ENCODE measurements at regions of chr17 and their contacts with region 1.

Region 1: GRCh38 chr17:38421171-38421841 is 7.0 kb upstream of the ARHGAP23 start:
- DNase-seq: no peak
- H3K4me3 ChIP-seq: no peak overlapping the region
- H3K27ac ChIP-seq: no peak overlapping the region
- H3K4me1 ChIP-seq: peaks cover 0 to 40% (median 35%) of the 10 kb centered on the region in 4 experiments
- H3K27me3 ChIP-seq: peaks cover 3 to 50% (median 31%) of the 10 kb centered on the region in 5 experiments

Region 2: GRCh38 chr17:38485146-38485468 is 63.8 kb after region 1 on chr17:
- CTCF ChIA-PET with region 1: interaction called, 47 read pairs
- POLR2A ChIA-PET with region 1: no interaction called
- DNase-seq: no peak
- H3K4me3 ChIP-seq: no peak overlapping the region
- H3K27ac ChIP-seq: no peak overlapping the region
- H3K4me1 ChIP-seq: peaks cover 0 to 2% (median 0%) of the 10 kb centered on the region in 4 experiments
- H3K27me3 ChIP-seq: no peaks in the 10 kb centered on the region

Region 3: DNA sequence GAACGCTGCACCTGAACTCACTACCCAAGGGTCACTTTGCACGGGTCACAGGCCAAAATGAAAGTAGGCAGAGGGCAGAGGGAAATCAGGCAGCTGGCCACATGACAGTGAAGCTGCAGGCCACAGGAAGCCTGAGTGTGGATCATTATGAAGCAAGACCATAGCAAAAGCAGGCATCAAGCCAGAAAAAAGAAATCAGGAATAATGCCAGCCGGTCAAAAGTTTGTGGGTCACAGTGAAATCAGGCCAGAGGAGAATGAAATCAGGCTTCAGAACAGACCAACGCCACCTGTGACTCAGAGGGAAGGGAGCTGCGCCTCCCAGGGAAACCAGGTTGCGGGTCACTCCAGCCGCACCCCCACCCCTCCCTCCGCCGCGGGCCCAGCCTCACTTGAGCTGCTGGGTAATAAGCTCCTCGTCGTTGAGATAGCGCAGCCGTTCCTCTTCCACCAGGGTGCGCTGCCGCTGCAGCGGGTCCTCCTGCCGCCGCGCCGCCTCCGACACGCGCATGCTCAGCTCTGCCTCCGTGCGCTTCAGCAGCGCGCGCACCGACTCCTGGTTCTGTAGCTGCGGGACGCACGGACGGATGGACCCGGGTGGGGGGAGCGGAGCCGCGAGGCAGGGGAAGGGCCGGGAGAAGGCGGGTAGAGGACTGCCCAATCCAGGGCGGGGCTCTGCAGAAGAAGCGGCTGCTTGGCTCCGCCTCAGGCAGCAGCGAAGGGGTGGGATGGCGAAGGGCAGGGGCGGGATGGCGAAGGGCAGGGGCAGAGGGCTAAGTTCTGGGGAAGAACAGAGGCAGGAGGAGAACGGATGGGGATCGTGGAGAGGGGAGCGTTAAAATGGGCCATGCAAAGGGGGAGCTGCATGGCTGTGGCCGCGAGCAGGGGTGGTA is 136.8 kb after region 1 on chr17:
- CTCF ChIA-PET with region 1: no interaction called
- POLR2A ChIA-PET with region 1: no interaction called
- DNase-seq: peak; percentile 88 to 93 (median 92)
- H3K4me3 ChIP-seq: peak overlapping the region in 6 of 7 experiments; percentile 45 to 68 (median 53)
- H3K27ac ChIP-seq: no peak overlapping the region
- H3K4me1 ChIP-seq: peaks cover 4 to 61% (median 43%) of the 10 kb centered on the region in 4 experiments
- H3K27me3 ChIP-seq: peaks cover 0 to 48% (median 38%) of the 10 kb centered on the region in 5 experiments

Measured in common myeloid progenitor, CD34-positive (primary cell).